ENCODE measurements at regions of chr4 and their contacts with region 1.

Region 1: GRCh38 chr4:108991551-108992328 is 228.9 kb upstream of the ETNPPL start:
- DNase-seq: no peak
- ATAC-seq: no peak
- H3K4me3 ChIP-seq: no peak overlapping the region
- H3K27ac ChIP-seq: no peak overlapping the region
- H3K4me1 ChIP-seq: no peaks in the 10 kb centered on the region
- H3K27me3 ChIP-seq: 0 out of 2 replicates have a peak, but pooled peaks cover 5% of the 10 kb centered on the region
- CTCF ChIP-seq: no peak
- POLR2A ChIP-seq: no peak
- RAD21 ChIP-seq: no peak

Region 2: GRCh38 chr4:108881190-108881589 is 110.5 kb before region 1 on chr4:
- CTCF ChIA-PET with region 1: no interaction called
- POLR2A ChIA-PET with region 1: no interaction called
- RAD21 ChIA-PET with region 1: no interaction called
- intact Hi-C with region 1: no loop called
- DNase-seq: no peak
- ATAC-seq: no peak
- H3K4me3 ChIP-seq: no peak overlapping the region
- H3K27ac ChIP-seq: no peak overlapping the region
- H3K4me1 ChIP-seq: no peaks in the 10 kb centered on the region
- H3K27me3 ChIP-seq: peaks cover 68% of the 10 kb centered on the region
- CTCF ChIP-seq: no peak
- POLR2A ChIP-seq: no peak
- RAD21 ChIP-seq: no peak

Region 3: DNA sequence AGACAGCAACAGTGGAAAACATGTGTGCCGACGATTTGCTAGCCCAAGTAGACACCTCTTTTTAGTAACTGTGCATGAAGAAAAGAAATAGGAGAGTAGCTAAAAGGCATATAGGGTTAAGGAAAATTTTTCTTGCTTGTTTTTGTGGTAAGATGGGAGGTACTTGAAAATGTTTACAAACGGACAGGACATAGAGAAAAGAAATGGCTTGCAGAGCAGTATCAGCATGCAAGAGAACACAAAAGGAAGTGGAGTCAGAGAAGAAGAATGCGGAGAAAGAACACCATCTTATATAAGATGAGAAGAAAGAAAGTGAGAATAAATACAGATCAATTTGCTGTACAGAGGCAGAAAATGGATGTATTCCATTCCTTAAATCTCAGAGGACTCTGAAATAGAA is 34.8 kb after region 1 on chr4:
- CTCF ChIA-PET with region 1: no interaction called
- POLR2A ChIA-PET with region 1: no interaction called
- RAD21 ChIA-PET with region 1: no interaction called
- intact Hi-C with region 1: loop called (anchors 1 kb)
- DNase-seq: no peak
- ATAC-seq: no peak
- H3K4me3 ChIP-seq: no peak overlapping the region
- H3K27ac ChIP-seq: no peak overlapping the region
- H3K4me1 ChIP-seq: no peaks in the 10 kb centered on the region
- H3K27me3 ChIP-seq: peaks cover 25% of the 10 kb centered on the region; the same call in 1 of the 2 replicates
- CTCF ChIP-seq: no peak
- POLR2A ChIP-seq: no peak
- RAD21 ChIP-seq: no peak